B cell (primary cell): ENCODE measurements at regions of chr7 and their contacts with region 1.

Region 1: DNA sequence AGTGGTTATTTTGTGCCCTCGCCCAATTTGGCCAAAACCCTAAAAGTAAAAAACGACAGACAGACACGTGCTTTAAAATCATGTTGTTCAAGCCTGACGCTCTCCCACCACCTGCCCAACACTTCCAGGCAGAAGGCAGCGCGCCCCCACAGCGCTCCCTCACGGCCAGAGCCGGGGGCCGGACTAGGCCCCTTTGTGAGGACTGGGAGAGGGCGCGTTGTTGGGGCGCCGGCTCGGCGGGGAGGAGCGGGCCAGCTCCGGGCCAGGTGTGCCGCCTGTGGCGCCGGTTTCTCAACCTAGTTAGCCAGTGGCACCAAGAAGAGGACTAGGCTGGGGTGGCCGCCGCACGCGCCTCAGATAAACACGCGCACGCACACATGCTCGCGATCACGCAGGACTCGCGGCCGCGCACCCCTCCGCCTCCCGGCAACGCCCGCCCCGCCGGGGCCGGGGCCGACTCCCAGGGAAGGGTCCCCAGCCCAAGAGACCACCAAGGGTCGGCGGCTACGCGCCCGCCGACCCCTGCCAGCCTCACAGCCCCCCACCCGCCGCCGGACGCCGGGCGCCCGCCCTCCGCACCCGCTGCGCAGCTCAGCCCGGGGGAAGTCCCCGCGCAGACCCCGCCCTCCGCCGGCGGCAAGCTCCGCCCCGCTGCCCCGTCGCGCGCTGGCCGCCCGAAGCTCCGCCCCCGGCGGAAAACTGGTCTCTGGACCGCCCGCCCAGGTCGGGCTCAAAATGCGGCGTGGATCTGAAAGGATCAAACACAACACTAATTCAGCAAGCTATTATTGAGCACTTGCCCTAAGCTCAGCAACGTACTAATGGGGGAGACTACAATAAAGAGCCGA is at the start of gene IMMP2L:
- DNase-seq: peak; percentile 94
- ATAC-seq: peak; percentile 96
- H3K4me3 ChIP-seq: peak within 1 kb of the TSS; percentile 45 to 74 (median 70)
- H3K4me3 Mint-ChIP-seq: peak within 1 kb of the TSS; percentile 93
- H3K27ac ChIP-seq: peak within 1 kb of the TSS; percentile 48 to 86
- H3K27ac Mint-ChIP-seq: peak within 1 kb of the TSS; percentile 93
- H3K4me1 ChIP-seq: peaks cover 17 to 23% of the 10 kb centered on the region in 2 donors
- H3K4me1 Mint-ChIP-seq: peaks cover 31% of the 10 kb centered on the region
- H3K27me3 ChIP-seq: peaks cover 0 to 7% (median 3%) of the 10 kb centered on the region in 4 experiments
- H3K27me3 Mint-ChIP-seq: peaks cover 8% of the 10 kb centered on the region
- CTCF ChIP-seq: peak; percentile 34
- total RNA-seq, gene IMMP2L: 34.2 and 36.5 TPM in 2 replicates

Region 2: DNA sequence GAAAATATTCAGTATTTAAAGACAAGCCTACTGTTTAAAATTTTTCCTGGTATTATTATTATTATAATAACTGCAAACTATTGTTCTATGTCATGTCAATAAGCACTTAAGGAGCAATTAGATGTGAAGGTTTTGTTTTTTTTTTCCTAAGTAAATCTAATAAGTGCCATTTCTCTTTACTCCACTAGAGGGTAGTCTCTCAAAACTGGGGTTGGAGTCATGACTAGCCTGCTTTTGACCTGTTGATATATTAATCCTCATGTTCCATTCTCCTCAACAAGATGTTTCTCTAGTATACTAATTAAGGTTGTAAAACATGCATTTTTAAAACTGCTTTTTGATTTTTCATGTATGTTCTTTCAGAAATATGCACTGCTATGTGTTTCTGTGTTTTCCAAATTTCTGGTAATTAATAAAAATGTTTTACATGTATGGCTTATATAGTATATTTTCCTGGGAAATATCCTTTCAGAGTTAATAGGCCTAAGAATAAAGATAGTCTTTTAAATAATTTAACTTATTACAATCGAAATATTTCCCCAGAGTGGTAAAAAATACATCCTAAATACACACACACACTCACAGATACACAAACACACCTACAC is 472.2 kb before region 1 on chr7:
- CTCF ChIA-PET with region 1: no interaction called
- POLR2A ChIA-PET with region 1: no interaction called
- intact Hi-C with region 1: loop called (anchors 10 kb)
- DNase-seq: peak; percentile 55
- ATAC-seq: peak; percentile 53
- H3K4me3 ChIP-seq: no peak overlapping the region
- H3K4me3 Mint-ChIP-seq: no peak overlapping the region
- H3K27ac ChIP-seq: no peak overlapping the region
- H3K27ac Mint-ChIP-seq: no peak overlapping the region
- H3K4me1 ChIP-seq: no peaks in the 10 kb centered on the region
- H3K4me1 Mint-ChIP-seq: peaks cover 6% of the 10 kb centered on the region
- H3K27me3 ChIP-seq: no peaks in the 10 kb centered on the region
- H3K27me3 Mint-ChIP-seq: no peaks in the 10 kb centered on the region
- CTCF ChIP-seq: peak; percentile 84

Region 3: DNA sequence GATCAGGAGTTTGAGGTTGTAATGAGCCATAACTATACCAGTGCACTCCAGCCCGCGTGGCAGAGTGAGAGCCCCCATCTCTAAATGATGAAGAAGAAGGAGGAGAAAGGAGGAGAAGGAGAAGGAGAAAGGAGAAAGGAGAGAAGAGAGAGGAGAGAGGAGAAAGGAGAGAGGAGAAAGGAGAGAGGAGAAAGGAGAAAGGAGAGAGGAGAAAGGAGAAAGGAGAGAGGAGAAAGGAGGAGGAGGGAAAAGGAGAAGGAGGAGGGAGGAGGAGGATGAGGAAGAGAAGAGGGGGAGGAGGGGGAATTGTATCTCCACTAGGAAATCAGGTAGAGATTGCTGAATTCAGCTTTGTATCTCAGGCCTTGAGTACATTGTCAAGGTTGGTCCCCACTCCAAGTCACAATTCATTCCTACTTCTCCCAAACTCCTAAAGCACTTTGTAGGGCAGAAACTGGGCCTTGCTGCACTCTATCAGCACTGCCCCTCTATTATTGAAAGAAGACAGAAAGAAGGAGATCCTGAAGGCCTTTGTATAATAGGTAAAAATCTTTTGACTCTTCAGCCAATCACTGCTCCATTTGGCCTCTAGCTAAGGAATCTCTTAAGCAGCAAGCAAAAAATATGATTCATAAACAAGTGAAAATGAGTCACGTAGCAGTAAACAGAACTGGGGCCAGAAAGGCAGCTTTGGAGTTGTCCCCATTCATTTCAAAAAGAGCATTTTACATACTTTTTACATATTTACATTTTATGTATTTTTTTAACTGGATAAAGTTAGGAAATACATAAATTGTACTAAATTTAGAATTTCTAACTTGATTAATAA is 177.8 kb before region 1 on chr7:
- CTCF ChIA-PET with region 1: no interaction called
- POLR2A ChIA-PET with region 1: no interaction called
- intact Hi-C with region 1: no loop called
- DNase-seq: no peak
- ATAC-seq: no peak
- H3K4me3 ChIP-seq: no peak overlapping the region
- H3K4me3 Mint-ChIP-seq: no peak overlapping the region
- H3K27ac ChIP-seq: no peak overlapping the region
- H3K27ac Mint-ChIP-seq: no peak overlapping the region
- H3K4me1 ChIP-seq: peaks cover 9 to 10% of the 10 kb centered on the region in 2 donors
- H3K4me1 Mint-ChIP-seq: peaks cover 13% of the 10 kb centered on the region
- H3K27me3 ChIP-seq: no peaks in the 10 kb centered on the region
- H3K27me3 Mint-ChIP-seq: no peaks in the 10 kb centered on the region
- CTCF ChIP-seq: peak; percentile 12

Region 4: DNA sequence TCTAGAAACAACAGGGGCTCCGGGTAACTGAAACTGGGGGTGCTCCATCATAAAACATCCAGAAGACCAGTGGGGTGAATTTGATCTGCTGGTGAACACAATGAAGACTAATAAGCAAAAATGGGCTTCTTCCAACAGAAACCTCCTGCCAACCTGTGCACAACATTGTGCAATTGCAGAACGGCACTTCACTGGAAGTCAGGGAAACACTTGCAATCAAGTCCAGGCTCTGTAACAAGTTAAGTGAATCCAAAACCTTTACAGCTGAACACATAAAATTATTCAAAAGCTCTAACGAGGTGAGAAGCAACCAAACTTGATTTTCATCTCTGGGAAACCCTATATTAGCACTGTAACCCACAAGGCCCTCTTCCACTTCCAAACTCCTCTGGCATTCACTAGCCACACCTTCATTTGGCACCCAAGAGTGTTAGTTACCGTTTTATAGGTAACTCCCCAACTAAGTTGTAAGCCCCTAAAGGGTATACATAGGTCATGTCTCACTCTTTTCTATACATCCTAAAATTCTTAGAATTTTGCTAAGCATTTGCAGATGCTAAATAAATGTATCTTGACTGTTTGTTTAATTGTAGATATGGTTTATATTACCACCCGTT is 21.8 kb before region 1 on chr7:
- CTCF ChIA-PET with region 1: no interaction called
- POLR2A ChIA-PET with region 1: no interaction called
- intact Hi-C with region 1: no loop called
- DNase-seq: no peak
- ATAC-seq: no peak
- H3K4me3 ChIP-seq: no peak overlapping the region
- H3K4me3 Mint-ChIP-seq: no peak overlapping the region
- H3K27ac ChIP-seq: no peak overlapping the region
- H3K27ac Mint-ChIP-seq: no peak overlapping the region
- H3K4me1 ChIP-seq: peaks cover 0 to 4% of the 10 kb centered on the region in 2 donors
- H3K4me1 Mint-ChIP-seq: peaks cover 4% of the 10 kb centered on the region
- H3K27me3 ChIP-seq: no peaks in the 10 kb centered on the region
- H3K27me3 Mint-ChIP-seq: no peaks in the 10 kb centered on the region
- CTCF ChIP-seq: no peak

Region 5: DNA sequence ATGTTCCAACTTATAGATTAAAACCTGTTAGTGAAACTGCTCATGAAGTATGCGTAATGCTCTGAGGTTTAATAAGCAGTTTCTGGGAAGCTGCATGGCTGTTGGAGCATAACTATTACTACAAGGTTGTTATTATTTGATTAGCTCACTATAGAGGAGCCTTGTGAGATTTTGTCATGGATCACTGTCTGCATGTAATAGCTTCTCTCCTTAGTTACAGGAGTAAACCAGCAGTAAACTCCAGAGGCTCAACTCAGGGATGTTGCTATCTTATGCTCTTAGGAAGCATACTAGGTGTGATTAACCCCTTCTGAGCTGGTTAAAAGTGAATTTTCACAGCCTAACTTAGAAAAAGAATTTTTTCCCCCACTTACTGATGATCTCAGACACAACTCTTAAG is 824.5 kb after region 1 on chr7:
- CTCF ChIA-PET with region 1: no interaction called
- POLR2A ChIA-PET with region 1: no interaction called
- intact Hi-C with region 1: loop called (anchors 2 kb)
- DNase-seq: no peak
- ATAC-seq: no peak
- H3K4me3 ChIP-seq: no peak overlapping the region
- H3K4me3 Mint-ChIP-seq: no peak overlapping the region
- H3K27ac ChIP-seq: no peak overlapping the region
- H3K27ac Mint-ChIP-seq: no peak overlapping the region
- H3K4me1 ChIP-seq: no peaks in the 10 kb centered on the region
- H3K4me1 Mint-ChIP-seq: peaks cover 2% of the 10 kb centered on the region
- H3K27me3 ChIP-seq: peaks cover 0 to 5% (median 1%) of the 10 kb centered on the region in 4 experiments
- H3K27me3 Mint-ChIP-seq: peaks cover 10% of the 10 kb centered on the region
- CTCF ChIP-seq: no peak

Region 6: DNA sequence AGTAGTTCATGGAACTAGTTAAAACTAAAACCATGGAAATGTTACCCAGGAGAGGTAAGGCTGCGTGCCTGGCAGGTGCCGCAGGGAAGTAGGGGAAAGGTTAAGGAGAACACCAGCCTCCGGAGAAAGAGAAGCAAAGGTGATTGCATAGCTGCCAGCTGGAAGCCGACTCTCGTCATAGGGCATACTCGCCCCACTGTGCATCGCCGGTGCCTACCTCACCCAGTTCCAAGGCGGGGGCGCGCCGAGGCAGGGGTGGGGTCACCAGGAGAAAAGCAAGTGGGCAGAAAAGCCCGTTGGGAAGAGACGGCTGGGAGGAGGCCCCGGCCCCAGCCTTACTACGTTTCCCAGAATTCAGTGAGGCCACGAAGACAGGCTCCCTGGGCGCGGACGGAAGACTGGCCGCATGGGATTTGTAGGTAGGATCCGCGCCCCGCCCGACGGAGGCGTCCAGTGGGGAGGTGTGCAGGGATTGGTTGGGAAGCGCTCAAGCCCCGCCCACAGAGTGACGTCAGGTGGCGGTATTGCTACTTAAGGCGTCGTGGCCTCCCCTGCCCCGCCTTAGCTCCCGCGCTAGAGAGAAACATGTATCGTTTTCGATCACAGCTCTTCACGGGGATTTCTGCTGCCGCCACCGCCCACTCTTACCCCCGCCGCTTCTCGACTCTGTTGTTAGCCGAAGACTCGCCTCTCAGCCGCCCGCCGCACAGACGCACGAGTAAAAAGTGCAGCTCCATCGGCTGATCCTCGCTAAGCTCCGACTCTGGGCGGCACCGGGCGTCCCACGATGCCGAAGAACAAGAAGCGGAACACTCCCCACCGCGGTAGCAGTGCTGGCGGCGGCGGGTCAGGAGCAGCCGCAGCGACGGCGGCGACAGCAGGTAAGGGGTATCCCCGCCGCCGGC is 888.0 kb after region 1 on chr7 and contains the start of gene IFRD1:
- CTCF ChIA-PET with region 1: interaction called, 3 read pairs
- POLR2A ChIA-PET with region 1: interaction called, 3 read pairs
- intact Hi-C with region 1: loop called (anchors 2 kb)
- DNase-seq: peak; percentile 99
- ATAC-seq: peak; percentile 84
- H3K4me3 ChIP-seq: peak within 1 kb of the TSS; percentile 80 to 100 (median 95)
- H3K4me3 Mint-ChIP-seq: peak within 1 kb of the TSS; percentile 95
- H3K27ac ChIP-seq: peak within 1 kb of the TSS; percentile 98 to 99
- H3K27ac Mint-ChIP-seq: peak within 1 kb of the TSS; percentile 98
- H3K4me1 ChIP-seq: peaks cover 16 to 19% of the 10 kb centered on the region in 2 donors
- H3K4me1 Mint-ChIP-seq: peaks cover 38% of the 10 kb centered on the region
- H3K27me3 ChIP-seq: no peaks in the 10 kb centered on the region
- H3K27me3 Mint-ChIP-seq: no peaks in the 10 kb centered on the region
- CTCF ChIP-seq: no peak
- total RNA-seq, gene IFRD1: 101 and 106 TPM in 2 replicates

Region 7: DNA sequence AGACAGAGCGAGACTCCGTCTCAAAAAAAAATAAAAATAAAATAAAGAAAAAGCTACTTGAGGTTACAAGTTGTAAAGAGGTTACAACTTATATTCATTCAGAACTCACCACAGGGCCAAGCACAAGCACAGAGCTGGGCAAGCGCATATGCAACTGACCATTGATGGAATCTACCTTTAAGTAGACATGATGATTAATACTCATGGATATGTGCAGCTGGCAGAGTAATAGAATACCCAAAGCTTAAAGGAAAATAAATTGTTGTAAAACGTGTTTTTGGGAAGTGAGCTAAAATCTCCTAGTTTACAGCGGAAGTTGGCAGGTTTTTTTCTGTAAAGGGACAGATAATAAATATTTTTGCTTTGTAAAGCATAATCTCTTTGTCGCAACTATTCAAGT is 1116.5 kb after region 1 on chr7:
- CTCF ChIA-PET with region 1: no interaction called
- POLR2A ChIA-PET with region 1: no interaction called
- intact Hi-C with region 1: no loop called
- DNase-seq: no peak
- ATAC-seq: no peak
- H3K4me3 ChIP-seq: no peak overlapping the region
- H3K4me3 Mint-ChIP-seq: no peak overlapping the region
- H3K27ac ChIP-seq: no peak overlapping the region
- H3K27ac Mint-ChIP-seq: no peak overlapping the region
- H3K4me1 ChIP-seq: no peaks in the 10 kb centered on the region
- H3K4me1 Mint-ChIP-seq: no peaks in the 10 kb centered on the region
- H3K27me3 ChIP-seq: no peaks in the 10 kb centered on the region
- H3K27me3 Mint-ChIP-seq: peaks cover 11% of the 10 kb centered on the region
- CTCF ChIP-seq: no peak

Region 8: GRCh38 chr7:113118074-113118959 is 1556.2 kb after region 1 on chr7 and contains the start of gene SMIM30:
- CTCF ChIA-PET with region 1: no interaction called
- POLR2A ChIA-PET with region 1: no interaction called
- intact Hi-C with region 1: loop called (anchors 10 kb)
- DNase-seq: peak; percentile 91
- ATAC-seq: peak; percentile 100
- H3K4me3 ChIP-seq: peak within 1 kb of the TSS; percentile 40 to 88 (median 69)
- H3K4me3 Mint-ChIP-seq: peak within 1 kb of the TSS; percentile 96
- H3K27ac ChIP-seq: peak within 1 kb of the TSS; percentile 62 to 87
- H3K27ac Mint-ChIP-seq: peak within 1 kb of the TSS; percentile 95
- H3K4me1 ChIP-seq: peaks cover 8 to 11% of the 10 kb centered on the region in 2 donors
- H3K4me1 Mint-ChIP-seq: peaks cover 23% of the 10 kb centered on the region
- H3K27me3 ChIP-seq: no peaks in the 10 kb centered on the region
- H3K27me3 Mint-ChIP-seq: no peaks in the 10 kb centered on the region
- CTCF ChIP-seq: no peak
- total RNA-seq, gene SMIM30: 21.0 and 24.4 TPM in 2 replicates